HCT116 (cell line): ENCODE measurements at regions of chr12 and their contacts with region 1.

Region 1: DNA sequence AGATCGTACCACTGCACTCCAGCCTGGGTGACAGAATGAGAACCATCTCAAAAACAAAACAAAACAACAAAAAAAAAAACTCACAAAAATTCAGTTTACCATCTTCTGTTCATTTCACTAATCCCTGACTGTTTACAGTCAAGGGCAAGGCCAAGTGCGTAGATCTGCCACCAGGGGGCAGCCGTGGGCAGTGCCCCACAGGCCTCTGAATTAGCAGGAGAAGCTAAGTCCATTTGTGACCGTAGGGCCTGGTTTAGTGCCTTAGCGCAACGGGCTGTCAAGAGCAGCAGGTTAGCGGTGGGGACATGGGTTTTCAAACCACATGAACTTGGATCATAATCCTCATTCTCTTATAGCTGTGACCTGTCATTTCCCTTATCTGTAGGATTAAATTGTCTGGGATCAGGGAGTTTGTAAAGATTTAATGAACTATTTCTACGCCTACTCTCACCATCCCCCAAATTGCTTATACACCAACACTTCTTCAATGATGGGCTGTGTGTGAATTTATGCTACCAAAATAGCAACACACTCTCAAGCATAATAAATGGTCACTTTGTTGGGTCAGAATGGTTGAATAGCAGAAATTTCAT is 49.0 kb downstream of the KCTD10 start:
- DNase-seq: peak; percentile 77
- ATAC-seq: peak; percentile 91
- H3K4me3 ChIP-seq: no peak overlapping the region
- H3K27ac ChIP-seq: no peak overlapping the region
- H3K4me1 ChIP-seq: peaks cover 0 to 11% of the 10 kb centered on the region in 2 experiments; a peak in 2 of 4 replicates
- H3K27me3 ChIP-seq: no peaks in the 10 kb centered on the region
- CTCF ChIP-seq: peak; percentile 77 to 98 (median 97)
- POLR2A ChIP-seq: no peak
- RAD21 ChIP-seq: peak; percentile 82

Region 2: GRCh38 chr12:108861878-108862587 is 566.1 kb before region 1 on chr12:
- CTCF ChIA-PET with region 1: no interaction called
- POLR2A ChIA-PET with region 1: no interaction called
- RAD21 ChIA-PET with region 1: no interaction called
- intact Hi-C with region 1: no loop called
- DNase-seq: no peak
- ATAC-seq: no peak
- H3K4me3 ChIP-seq: no peak overlapping the region
- H3K27ac ChIP-seq: no peak overlapping the region
- H3K4me1 ChIP-seq: peaks cover 7 to 35% of the 10 kb centered on the region in 2 experiments
- H3K27me3 ChIP-seq: no peaks in the 10 kb centered on the region
- CTCF ChIP-seq: no peak
- POLR2A ChIP-seq: no peak
- RAD21 ChIP-seq: no peak

Region 3: GRCh38 chr12:109358154-109358869 is 69.8 kb before region 1 on chr12:
- CTCF ChIA-PET with region 1: no interaction called
- POLR2A ChIA-PET with region 1: no interaction called
- RAD21 ChIA-PET with region 1: no interaction called
- intact Hi-C with region 1: no loop called
- DNase-seq: no peak
- ATAC-seq: no peak
- H3K4me3 ChIP-seq: no peak overlapping the region
- H3K27ac ChIP-seq: no peak overlapping the region
- H3K4me1 ChIP-seq: peaks cover 7 to 9% of the 10 kb centered on the region in 2 experiments; a peak in 3 of 4 replicates
- H3K27me3 ChIP-seq: peaks cover 7% of the 10 kb centered on the region; the same call in 1 of the 2 replicates
- CTCF ChIP-seq: no peak
- POLR2A ChIP-seq: no peak
- RAD21 ChIP-seq: no peak

Region 4: GRCh38 chr12:109393437-109394345 is 34.4 kb before region 1 on chr12:
- CTCF ChIA-PET with region 1: interaction called, 10 read pairs
- POLR2A ChIA-PET with region 1: no interaction called
- RAD21 ChIA-PET with region 1: no interaction called
- intact Hi-C with region 1: no loop called
- DNase-seq: peak; percentile 48
- ATAC-seq: peak; percentile 89
- H3K4me3 ChIP-seq: no peak overlapping the region
- H3K27ac ChIP-seq: no peak overlapping the region
- H3K4me1 ChIP-seq: no peaks in the 10 kb centered on the region
- H3K27me3 ChIP-seq: no peaks in the 10 kb centered on the region
- CTCF ChIP-seq: peak; percentile 61 to 97 (median 95); a peak in 5 of 6 replicates
- POLR2A ChIP-seq: no peak
- RAD21 ChIP-seq: peak; percentile 66

Region 5: GRCh38 chr12:109449845-109450532 is 21.9 kb after region 1 on chr12:
- CTCF ChIA-PET with region 1: interaction called, 12 read pairs
- POLR2A ChIA-PET with region 1: no interaction called
- RAD21 ChIA-PET with region 1: no interaction called
- intact Hi-C with region 1: no loop called
- DNase-seq: no peak
- ATAC-seq: peak; percentile 90
- H3K4me3 ChIP-seq: no peak overlapping the region
- H3K27ac ChIP-seq: no peak overlapping the region
- H3K4me1 ChIP-seq: no peaks in the 10 kb centered on the region
- H3K27me3 ChIP-seq: no peaks in the 10 kb centered on the region
- CTCF ChIP-seq: peak in 2 of 3 experiments; percentile 39 to 48; a peak in 3 of 6 replicates
- POLR2A ChIP-seq: no peak
- RAD21 ChIP-seq: no peak; the same call in 1 of the 2 replicates

Region 6: GRCh38 chr12:109477185-109477962 is 49.2 kb after region 1 on chr12 and contains the starts of genes KCTD10 and UBE3B:
- CTCF ChIA-PET with region 1: interaction called, 4 read pairs
- POLR2A ChIA-PET with region 1: no interaction called
- RAD21 ChIA-PET with region 1: no interaction called
- intact Hi-C with region 1: loop called (anchors 2 kb)
- DNase-seq: peak; percentile 81
- ATAC-seq: peak; percentile 89
- H3K4me3 ChIP-seq: peak within 1 kb of the TSS; percentile 87 to 97
- H3K27ac ChIP-seq: peak within 1 kb of the TSS; percentile 94
- H3K4me1 ChIP-seq: peaks cover 9 to 18% of the 10 kb centered on the region in 2 experiments
- H3K27me3 ChIP-seq: no peaks in the 10 kb centered on the region
- CTCF ChIP-seq: no peak
- POLR2A ChIP-seq: peak; percentile 65
- RAD21 ChIP-seq: no peak
- total RNA-seq, gene KCTD10: 34.7 TPM
- total RNA-seq, gene UBE3B: 28.9 TPM

Region 7: GRCh38 chr12:109523071-109523470 is 94.9 kb after region 1 on chr12:
- CTCF ChIA-PET with region 1: no interaction called
- POLR2A ChIA-PET with region 1: no interaction called
- RAD21 ChIA-PET with region 1: no interaction called
- intact Hi-C with region 1: no loop called
- DNase-seq: no peak
- ATAC-seq: no peak
- H3K4me3 ChIP-seq: no peak overlapping the region
- H3K27ac ChIP-seq: no peak overlapping the region
- H3K4me1 ChIP-seq: no peaks in the 10 kb centered on the region
- H3K27me3 ChIP-seq: no peaks in the 10 kb centered on the region
- CTCF ChIP-seq: no peak
- POLR2A ChIP-seq: no peak
- RAD21 ChIP-seq: no peak

Region 8: GRCh38 chr12:109763201-109763841 is 335.2 kb after region 1 on chr12:
- CTCF ChIA-PET with region 1: no interaction called
- POLR2A ChIA-PET with region 1: no interaction called
- RAD21 ChIA-PET with region 1: no interaction called
- intact Hi-C with region 1: no loop called
- DNase-seq: no peak
- ATAC-seq: peak; percentile 82
- H3K4me3 ChIP-seq: no peak overlapping the region
- H3K27ac ChIP-seq: no peak overlapping the region
- H3K4me1 ChIP-seq: peaks cover 0 to 12% of the 10 kb centered on the region in 2 experiments; a peak in 2 of 4 replicates
- H3K27me3 ChIP-seq: no peaks in the 10 kb centered on the region
- CTCF ChIP-seq: no peak
- POLR2A ChIP-seq: no peak
- RAD21 ChIP-seq: no peak

Region 9: GRCh38 chr12:109775172-109775881 is 347.2 kb after region 1 on chr12:
- CTCF ChIA-PET with region 1: interaction called, 22 read pairs
- POLR2A ChIA-PET with region 1: no interaction called
- RAD21 ChIA-PET with region 1: interaction called in 1 of 2 experiments, 4 read pairs
- intact Hi-C with region 1: loop called (anchors 1 kb)
- DNase-seq: no peak
- ATAC-seq: peak; percentile 67
- H3K4me3 ChIP-seq: no peak overlapping the region
- H3K27ac ChIP-seq: no peak overlapping the region
- H3K4me1 ChIP-seq: peaks cover 13 to 34% of the 10 kb centered on the region in 2 experiments
- H3K27me3 ChIP-seq: no peaks in the 10 kb centered on the region
- CTCF ChIP-seq: peak; percentile 91 to 96 (median 94)
- POLR2A ChIP-seq: no peak
- RAD21 ChIP-seq: peak; percentile 98